ENCODE measurements at regions of chr6 and their contacts with region 1.

Region 1: GRCh38 chr6:31383149-31383548 is 20.2 kb upstream of the MICA start:
- DNase-seq: peak; percentile 64
- H3K4me3 ChIP-seq: no peak overlapping the region
- H3K27ac ChIP-seq: no peak overlapping the region
- H3K4me1 ChIP-seq: no peaks in the 10 kb centered on the region
- H3K27me3 ChIP-seq: peaks cover 2% of the 10 kb centered on the region
- CTCF ChIP-seq: no peak

Region 2: DNA sequence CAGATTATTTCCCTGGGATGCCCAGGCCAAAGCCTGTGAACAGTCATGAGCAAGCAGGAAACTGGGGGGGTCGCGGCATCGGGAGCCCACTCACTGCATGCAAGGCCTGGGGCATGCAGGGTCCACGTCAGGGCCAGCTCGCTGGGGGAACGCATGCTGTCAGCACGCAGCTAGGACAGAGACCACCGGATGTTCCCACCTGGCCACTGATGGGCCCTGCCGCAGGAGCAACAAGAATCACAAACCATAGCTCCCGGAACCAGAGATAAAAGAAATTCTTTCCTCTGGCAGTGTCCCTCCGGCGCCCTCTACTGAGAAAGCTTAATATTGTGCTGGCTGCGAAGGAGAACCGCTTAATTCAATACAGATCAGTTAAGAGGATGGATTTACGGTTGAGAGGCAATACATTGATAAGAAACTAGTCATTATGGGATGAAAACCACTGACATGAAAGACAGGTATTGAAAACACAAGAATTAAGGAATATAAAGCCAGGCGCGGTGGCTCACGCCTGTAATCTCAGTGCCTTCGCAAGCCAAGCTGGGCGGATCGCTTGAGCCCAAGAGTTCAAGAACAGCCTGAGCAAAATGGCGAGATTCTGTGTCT is 303.4 kb before region 1 on chr6:
- CTCF ChIA-PET with region 1: no interaction called
- dilution Hi-C with region 1: no loop called
- in situ Hi-C with region 1: no loop called
- intact Hi-C with region 1: no loop called
- DNase-seq: peak; percentile 49
- H3K4me3 ChIP-seq: peak overlapping the region in 1 of 3 experiments; percentile 27
- H3K27ac ChIP-seq: no peak overlapping the region
- H3K4me1 ChIP-seq: peaks cover 8% of the 10 kb centered on the region
- H3K27me3 ChIP-seq: no peaks in the 10 kb centered on the region
- CTCF ChIP-seq: peak; percentile 72 to 83

Region 3: DNA sequence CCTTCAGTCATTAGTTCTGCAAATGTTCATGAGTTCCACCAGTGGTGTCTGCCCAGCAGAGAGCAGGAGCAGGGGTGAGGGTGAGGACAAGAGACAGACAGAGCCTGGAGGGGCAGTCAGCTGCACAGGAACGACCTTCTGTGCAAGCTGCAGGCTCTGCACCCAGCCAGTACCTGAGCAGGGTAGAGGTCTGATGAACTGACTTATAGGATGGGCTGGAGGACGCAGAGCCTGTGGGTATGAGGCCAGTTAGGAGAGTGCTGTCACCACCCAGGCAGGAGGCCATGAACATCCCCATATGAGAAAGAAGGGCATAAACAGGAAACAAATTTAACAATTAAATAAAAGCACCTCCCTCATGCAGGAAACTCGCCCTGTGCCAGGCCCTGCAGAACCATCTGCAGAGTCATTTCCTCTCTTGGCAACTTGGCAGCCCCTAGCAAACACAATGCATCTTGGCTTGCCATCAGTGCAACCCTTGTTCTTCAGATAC is 288.7 kb before region 1 on chr6:
- CTCF ChIA-PET with region 1: no interaction called
- dilution Hi-C with region 1: no loop called
- in situ Hi-C with region 1: no loop called
- intact Hi-C with region 1: no loop called
- DNase-seq: peak; percentile 17
- H3K4me3 ChIP-seq: no peak overlapping the region
- H3K27ac ChIP-seq: no peak overlapping the region
- H3K4me1 ChIP-seq: peaks cover 13% of the 10 kb centered on the region
- H3K27me3 ChIP-seq: no peaks in the 10 kb centered on the region
- CTCF ChIP-seq: no peak

Region 4: GRCh38 chr6:31485055-31485454 is 101.9 kb after region 1 on chr6:
- CTCF ChIA-PET with region 1: no interaction called
- dilution Hi-C with region 1: no loop called
- in situ Hi-C with region 1: no loop called
- intact Hi-C with region 1: loop called (anchors 1 kb)
- DNase-seq: no peak
- H3K4me3 ChIP-seq: no peak overlapping the region
- H3K27ac ChIP-seq: no peak overlapping the region
- H3K4me1 ChIP-seq: no peaks in the 10 kb centered on the region
- H3K27me3 ChIP-seq: no peaks in the 10 kb centered on the region
- CTCF ChIP-seq: no peak